Posterior cingulate gyrus (tissue), 11 donors: ENCODE measurements at regions of chr17 and their contacts with region 1.

Region 1: GRCh38 chr17:1908699-1909309 is 79.0 kb downstream of the RPA1 start:
- DNase-seq: peak in 8 of 10 donors; percentile 29 to 93 (median 66)

Region 2: GRCh38 chr17:2029911-2030778 is 121.3 kb after region 1 on chr17 and contains the start of gene DPH1:
- intact Hi-C with region 1: loop called (anchors 1 kb)
- DNase-seq: peak; percentile 81 to 99 (median 90)

Region 3: DNA sequence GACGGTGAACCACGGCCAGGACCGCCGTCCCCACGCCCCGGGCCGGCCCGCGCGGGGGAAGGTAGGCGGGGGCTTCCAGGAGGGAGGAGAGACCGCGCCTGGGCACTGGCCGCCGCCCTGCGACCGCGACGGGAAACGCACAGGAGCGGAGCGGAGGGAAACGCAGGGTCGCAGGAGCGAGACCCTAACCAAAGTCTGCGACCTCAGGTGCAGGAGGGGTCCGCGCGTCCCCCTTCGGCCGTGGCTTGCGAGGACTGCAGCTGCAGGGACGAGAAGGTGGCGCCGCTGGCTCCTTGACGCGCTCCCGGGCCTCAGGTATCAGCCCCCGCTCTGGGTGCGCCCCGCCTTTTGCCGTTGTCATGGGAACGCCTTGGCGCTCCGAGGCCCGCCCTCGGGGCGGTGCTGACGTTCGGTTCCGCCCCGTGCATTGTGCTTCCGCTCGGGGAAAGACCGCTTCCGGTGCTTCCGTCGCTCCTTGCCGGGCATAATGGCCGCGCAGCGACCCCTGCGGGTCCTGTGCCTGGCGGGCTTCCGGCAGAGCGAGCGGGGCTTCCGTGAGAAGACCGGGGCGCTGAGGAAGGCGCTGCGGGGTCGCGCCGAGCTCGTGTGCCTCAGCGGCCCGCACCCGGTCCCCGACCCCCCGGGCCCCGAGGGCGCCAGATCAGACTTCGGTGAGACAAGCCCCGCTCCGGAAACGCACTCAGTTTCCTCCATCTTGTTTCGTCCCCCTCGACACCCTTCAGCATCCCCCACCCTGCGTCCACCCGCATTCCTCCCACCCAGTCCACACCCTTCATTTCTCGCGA is 133.0 kb after region 1 on chr17 and contains the start of gene OVCA2:
- intact Hi-C with region 1: no loop called
- DNase-seq: peak; percentile 88 to 99 (median 96)